ENCODE measurements at regions of chr16 and their contacts with region 1.

Region 1: GRCh38 chr16:67028555-67029248 is at the start of gene CBFB:
- DNase-seq: peak; percentile 94 to 97 (median 96)
- H3K4me3 ChIP-seq: peak within 1 kb of the TSS; percentile 76 to 84
- H3K4me3 Mint-ChIP-seq: peak within 1 kb of the TSS; percentile 90 to 93 (median 92)
- H3K27ac ChIP-seq: peak within 1 kb of the TSS; percentile 88
- H3K27ac Mint-ChIP-seq: peak within 1 kb of the TSS; percentile 94 to 97 (median 96)
- H3K4me1 ChIP-seq: peaks cover 43% of the 10 kb centered on the region
- H3K4me1 Mint-ChIP-seq: peaks cover 20 to 50% (median 37%) of the 10 kb centered on the region in 4 donors
- H3K27me3 ChIP-seq: no peaks in the 10 kb centered on the region
- H3K27me3 Mint-ChIP-seq: no peaks in the 10 kb centered on the region
- total RNA-seq, gene CBFB: 112 TPM

Region 2: DNA sequence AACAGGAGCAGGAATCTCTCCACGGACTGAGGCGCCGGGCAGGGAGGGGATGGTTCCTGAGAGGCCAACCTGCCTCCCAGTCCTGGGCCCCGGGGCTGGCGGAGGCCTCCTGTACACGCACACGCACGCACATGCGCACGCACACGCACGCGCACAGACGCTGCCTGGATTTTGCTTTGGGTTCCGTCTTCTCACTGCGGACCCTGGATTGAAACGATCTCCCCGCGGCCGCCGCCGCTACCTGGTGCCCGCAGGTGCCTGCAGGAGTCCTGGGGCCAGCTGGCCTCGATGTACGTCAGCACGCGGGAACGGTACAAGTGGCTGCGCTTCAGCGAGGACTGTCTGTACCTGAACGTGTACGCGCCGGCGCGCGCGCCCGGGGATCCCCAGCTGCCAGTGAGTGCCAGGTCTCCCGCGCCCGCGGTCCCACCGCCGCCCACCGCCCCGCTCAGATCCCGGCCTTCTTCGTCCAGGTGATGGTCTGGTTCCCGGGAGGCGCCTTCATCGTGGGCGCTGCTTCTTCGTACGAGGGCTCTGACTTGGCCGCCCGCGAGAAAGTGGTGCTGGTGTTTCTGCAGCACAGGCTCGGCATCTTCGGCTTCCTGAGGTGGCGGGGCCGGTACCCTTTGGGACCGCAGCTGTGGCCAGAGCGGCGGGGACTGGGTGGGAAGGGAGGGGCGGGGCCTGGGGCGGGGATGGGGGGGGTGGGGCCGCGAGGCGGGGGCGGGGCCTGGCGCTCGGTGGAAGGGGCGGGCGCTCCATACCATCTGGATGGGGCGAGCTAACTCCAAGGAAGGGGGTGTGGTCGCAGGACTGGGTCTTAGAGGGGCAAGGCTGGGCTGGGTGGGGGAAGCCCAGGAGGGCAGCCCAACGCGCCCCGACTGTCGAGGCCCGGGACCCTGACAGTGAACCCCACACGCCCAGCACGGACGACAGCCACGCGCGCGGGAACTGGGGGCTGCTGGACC is 28.0 kb before region 1 on chr16:
- CTCF ChIA-PET with region 1: no interaction called
- POLR2A ChIA-PET with region 1: interaction called, 11 read pairs
- intact Hi-C with region 1: no loop called
- DNase-seq: peak; percentile 61 to 82 (median 65)
- H3K4me3 ChIP-seq: peak overlapping the region in 1 of 2 donors; percentile 70
- H3K4me3 Mint-ChIP-seq: peak overlapping the region; percentile 78 to 90 (median 86)
- H3K27ac ChIP-seq: peak overlapping the region; percentile 55
- H3K27ac Mint-ChIP-seq: peak overlapping the region; percentile 76 to 94 (median 91)
- H3K4me1 ChIP-seq: peaks cover 15% of the 10 kb centered on the region
- H3K4me1 Mint-ChIP-seq: peaks cover 5 to 27% (median 18%) of the 10 kb centered on the region in 4 donors
- H3K27me3 ChIP-seq: no peaks in the 10 kb centered on the region
- H3K27me3 Mint-ChIP-seq: no peaks in the 10 kb centered on the region

Region 3: DNA sequence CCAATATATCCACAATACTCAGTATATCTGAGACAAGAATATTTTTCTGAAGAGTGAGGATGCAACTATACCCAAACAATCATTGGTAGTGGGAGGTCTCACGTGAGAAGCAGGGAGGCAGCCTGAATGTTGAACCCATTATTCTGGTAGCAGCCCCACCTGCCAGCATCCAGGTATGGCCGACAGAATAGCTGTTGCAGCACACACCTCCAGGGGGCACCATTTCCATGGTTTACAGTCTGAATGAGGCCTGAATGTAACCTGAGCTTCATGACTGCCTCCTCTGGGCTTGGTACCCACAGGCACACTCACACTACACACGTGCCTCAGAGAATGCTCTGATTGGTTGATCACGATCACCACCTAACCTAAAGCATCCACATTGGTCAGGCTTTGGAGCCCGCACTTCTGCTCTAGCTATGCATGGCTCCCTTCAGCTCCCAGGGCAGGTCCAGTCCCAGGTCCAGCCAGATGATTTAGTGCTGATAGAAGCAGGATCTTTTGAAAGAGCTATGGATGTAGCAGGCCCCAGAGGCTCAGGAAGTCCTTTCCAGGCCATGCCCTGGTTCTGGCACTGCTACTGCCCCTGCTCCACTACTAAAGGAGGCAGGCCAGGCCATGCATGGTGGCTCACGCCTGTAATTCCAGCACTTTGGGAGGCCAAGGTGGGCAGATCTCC is 10.8 kb before region 1 on chr16:
- CTCF ChIA-PET with region 1: interaction called, 23 read pairs
- POLR2A ChIA-PET with region 1: interaction called, 41 read pairs
- intact Hi-C with region 1: loop called (anchors 1 kb)
- DNase-seq: peak; percentile 82 to 88 (median 86)
- H3K4me3 ChIP-seq: no peak overlapping the region
- H3K4me3 Mint-ChIP-seq: peak overlapping the region in 2 of 8 donors; percentile 3 to 21
- H3K27ac ChIP-seq: no peak overlapping the region
- H3K27ac Mint-ChIP-seq: peak overlapping the region in 4 of 7 donors; percentile 24 to 77 (median 56)
- H3K4me1 ChIP-seq: peaks cover 13% of the 10 kb centered on the region
- H3K4me1 Mint-ChIP-seq: peaks cover 2 to 19% (median 8%) of the 10 kb centered on the region in 4 donors
- H3K27me3 ChIP-seq: no peaks in the 10 kb centered on the region
- H3K27me3 Mint-ChIP-seq: no peaks in the 10 kb centered on the region

Region 4: GRCh38 chr16:67043420-67043819 is 14.7 kb after region 1 on chr16:
- CTCF ChIA-PET with region 1: interaction called, 3 read pairs
- POLR2A ChIA-PET with region 1: interaction called, 10 read pairs
- intact Hi-C with region 1: no loop called
- DNase-seq: no peak
- H3K4me3 ChIP-seq: no peak overlapping the region
- H3K4me3 Mint-ChIP-seq: no peak overlapping the region
- H3K27ac ChIP-seq: no peak overlapping the region
- H3K27ac Mint-ChIP-seq: peak overlapping the region in 1 of 7 donors; percentile 30
- H3K4me1 ChIP-seq: no peaks in the 10 kb centered on the region
- H3K4me1 Mint-ChIP-seq: peaks cover 25 to 40% (median 33%) of the 10 kb centered on the region in 4 donors
- H3K27me3 ChIP-seq: no peaks in the 10 kb centered on the region
- H3K27me3 Mint-ChIP-seq: no peaks in the 10 kb centered on the region

Region 5: GRCh38 chr16:67053767-67054334 is 25.1 kb after region 1 on chr16:
- CTCF ChIA-PET with region 1: no interaction called
- POLR2A ChIA-PET with region 1: interaction called, 22 read pairs
- intact Hi-C with region 1: loop called (anchors 2 kb)
- DNase-seq: peak in 3 of 5 donors; percentile 10 to 31 (median 12)
- H3K4me3 ChIP-seq: no peak overlapping the region
- H3K4me3 Mint-ChIP-seq: peak overlapping the region; percentile 64 to 90 (median 84)
- H3K27ac ChIP-seq: peak overlapping the region; percentile 45
- H3K27ac Mint-ChIP-seq: peak overlapping the region; percentile 85 to 96 (median 92)
- H3K4me1 ChIP-seq: peaks cover 50% of the 10 kb centered on the region
- H3K4me1 Mint-ChIP-seq: peaks cover 35 to 50% (median 42%) of the 10 kb centered on the region in 4 donors
- H3K27me3 ChIP-seq: no peaks in the 10 kb centered on the region
- H3K27me3 Mint-ChIP-seq: no peaks in the 10 kb centered on the region

Region 6: GRCh38 chr16:67109407-67110135 is 80.9 kb after region 1 on chr16 and contains the start of gene PHAF1:
- CTCF ChIA-PET with region 1: no interaction called
- POLR2A ChIA-PET with region 1: interaction called, 12 read pairs
- intact Hi-C with region 1: loop called (anchors 1 kb)
- DNase-seq: peak; percentile 93 to 98 (median 96)
- H3K4me3 ChIP-seq: peak within 1 kb of the TSS; percentile 85 to 96
- H3K4me3 Mint-ChIP-seq: peak within 1 kb of the TSS; percentile 92 to 97 (median 94)
- H3K27ac ChIP-seq: peak within 1 kb of the TSS; percentile 66
- H3K27ac Mint-ChIP-seq: peak within 1 kb of the TSS; percentile 84 to 95 (median 91)
- H3K4me1 ChIP-seq: peaks cover 30% of the 10 kb centered on the region
- H3K4me1 Mint-ChIP-seq: peaks cover 21 to 41% (median 30%) of the 10 kb centered on the region in 4 donors
- H3K27me3 ChIP-seq: no peaks in the 10 kb centered on the region
- H3K27me3 Mint-ChIP-seq: no peaks in the 10 kb centered on the region
- total RNA-seq, gene PHAF1: 22.2 to 22.7 TPM

Region 7: DNA sequence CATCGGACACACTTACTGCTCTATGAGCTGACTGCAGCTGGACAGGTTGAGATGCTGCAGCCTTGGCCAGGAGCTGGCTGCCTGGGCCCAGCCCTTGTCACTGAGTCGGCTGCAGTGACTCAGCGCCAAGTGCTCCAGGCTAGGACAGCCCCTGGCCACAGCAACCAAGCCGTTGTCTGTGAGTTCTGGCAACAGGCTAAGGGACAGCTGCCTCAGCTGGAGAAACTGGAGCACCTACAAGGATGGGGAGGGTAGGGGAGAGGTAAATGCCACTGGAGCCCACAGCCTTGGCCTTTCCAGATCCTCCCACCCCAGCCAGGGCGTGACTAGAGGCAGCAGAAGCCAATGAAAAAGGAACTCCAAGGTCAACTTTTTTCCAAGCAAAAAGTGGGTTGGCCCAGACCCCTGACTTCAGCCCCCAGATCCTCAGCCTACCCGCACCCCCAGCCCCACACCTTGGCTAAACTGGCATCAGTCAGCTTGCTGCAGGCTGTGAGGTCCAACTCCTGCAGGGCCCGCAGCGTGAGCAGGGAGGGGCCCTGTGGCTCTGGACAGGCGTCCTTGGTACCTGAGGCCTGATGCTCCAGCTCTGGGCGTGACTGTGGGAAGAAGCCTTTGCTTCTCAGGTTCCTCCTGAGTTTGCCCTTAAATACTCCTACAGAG is 179.3 kb after region 1 on chr16:
- CTCF ChIA-PET with region 1: no interaction called
- POLR2A ChIA-PET with region 1: no interaction called
- intact Hi-C with region 1: no loop called
- DNase-seq: no peak
- H3K4me3 ChIP-seq: no peak overlapping the region
- H3K4me3 Mint-ChIP-seq: no peak overlapping the region
- H3K27ac ChIP-seq: no peak overlapping the region
- H3K27ac Mint-ChIP-seq: no peak overlapping the region
- H3K4me1 ChIP-seq: no peaks in the 10 kb centered on the region
- H3K4me1 Mint-ChIP-seq: no peaks in the 10 kb centered on the region
- H3K27me3 ChIP-seq: no peaks in the 10 kb centered on the region
- H3K27me3 Mint-ChIP-seq: no peaks in the 10 kb centered on the region

Region 8: DNA sequence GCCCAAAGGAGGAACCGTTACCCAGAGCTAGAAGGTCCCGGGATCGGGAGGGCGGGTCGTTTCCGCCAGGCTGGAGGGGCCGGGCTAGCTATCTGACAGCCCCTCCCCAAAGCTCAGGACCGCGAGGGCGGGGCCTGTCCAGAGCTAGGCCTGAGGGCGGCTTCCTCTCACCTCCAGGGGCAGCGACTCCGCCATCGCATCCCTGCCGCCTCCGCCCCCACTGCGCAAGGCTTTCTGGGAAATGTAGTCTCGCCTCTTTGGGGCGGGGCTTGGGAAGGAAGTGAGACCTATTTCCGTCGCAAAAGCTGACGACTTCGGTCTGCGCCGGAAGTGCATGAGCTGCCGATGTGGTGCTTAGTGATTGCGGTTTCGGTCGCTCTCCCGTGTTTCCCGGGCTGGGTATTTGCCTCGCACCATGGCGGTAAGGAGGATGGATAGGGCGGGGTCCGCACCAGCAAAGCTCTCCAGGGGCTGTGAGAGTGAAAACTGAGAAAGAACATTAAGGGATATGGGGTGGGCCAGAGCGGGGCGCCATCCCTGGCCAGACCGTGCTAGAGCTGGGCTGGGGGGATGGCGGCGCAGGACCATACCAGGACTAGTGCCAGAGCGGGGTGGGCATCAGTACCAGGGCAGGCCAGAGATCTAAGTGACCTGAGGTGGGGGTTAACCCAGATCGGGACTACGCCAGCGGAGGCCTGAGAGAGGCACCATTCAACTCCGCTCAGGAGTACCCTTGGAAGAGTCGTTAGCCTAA is 198.3 kb after region 1 on chr16 and contains the start of gene TMEM208:
- CTCF ChIA-PET with region 1: no interaction called
- POLR2A ChIA-PET with region 1: interaction called, 10 read pairs
- intact Hi-C with region 1: no loop called
- DNase-seq: peak; percentile 95 to 99 (median 97)
- H3K4me3 ChIP-seq: peak within 1 kb of the TSS; percentile 73 to 99
- H3K4me3 Mint-ChIP-seq: peak within 1 kb of the TSS; percentile 98 to 100 (median 100)
- H3K27ac ChIP-seq: peak within 1 kb of the TSS; percentile 88
- H3K27ac Mint-ChIP-seq: peak within 1 kb of the TSS; percentile 96 to 100 (median 99)
- H3K4me1 ChIP-seq: peaks cover 51% of the 10 kb centered on the region
- H3K4me1 Mint-ChIP-seq: peaks cover 43 to 58% (median 54%) of the 10 kb centered on the region in 4 donors
- H3K27me3 ChIP-seq: no peaks in the 10 kb centered on the region
- H3K27me3 Mint-ChIP-seq: no peaks in the 10 kb centered on the region
- total RNA-seq, gene TMEM208: 35.5 to 35.7 TPM

Measured in CD4-positive, alpha-beta memory T cell (primary cell).